Naive thymus-derived CD4-positive, alpha-beta T cell (primary cell): ENCODE measurements at regions of chr11 and their contacts with region 1.

Region 1: GRCh38 chr11:128522055-128522942 is 65.1 kb downstream of the ETS1 start:
- DNase-seq: peak; percentile 67 to 95 (median 84)
- ATAC-seq: peak; percentile 87
- H3K4me3 ChIP-seq: peak overlapping the region; percentile 96
- H3K4me3 Mint-ChIP-seq: peak overlapping the region; percentile 94 to 100 (median 98)
- H3K27ac ChIP-seq: peak overlapping the region; percentile 97
- H3K27ac Mint-ChIP-seq: peak overlapping the region; percentile 94 to 99 (median 98)
- H3K4me1 ChIP-seq: peaks cover 36 to 43% of the 10 kb centered on the region in 2 donors
- H3K4me1 Mint-ChIP-seq: peaks cover 35 to 52% (median 45%) of the 10 kb centered on the region in 7 donors
- H3K27me3 ChIP-seq: no peaks in the 10 kb centered on the region
- H3K27me3 Mint-ChIP-seq: peaks cover 0 to 3% (median 0%) of the 10 kb centered on the region in 5 donors

Region 2: GRCh38 chr11:128302425-128303186 is 219.7 kb before region 1 on chr11:
- CTCF ChIA-PET with region 1: interaction called, 3 read pairs
- POLR2A ChIA-PET with region 1: interaction called, 691 read pairs
- intact Hi-C with region 1: loop called (anchors 1 kb)
- DNase-seq: peak; percentile 39 to 97 (median 92)
- ATAC-seq: peak; percentile 92
- H3K4me3 ChIP-seq: peak overlapping the region; percentile 52
- H3K4me3 Mint-ChIP-seq: peak overlapping the region; percentile 81 to 98 (median 93)
- H3K27ac ChIP-seq: peak overlapping the region; percentile 98
- H3K27ac Mint-ChIP-seq: peak overlapping the region; percentile 93 to 100 (median 98)
- H3K4me1 ChIP-seq: peaks cover 83 to 95% of the 10 kb centered on the region in 2 donors
- H3K4me1 Mint-ChIP-seq: peaks cover 52 to 92% (median 88%) of the 10 kb centered on the region in 7 donors
- H3K27me3 ChIP-seq: no peaks in the 10 kb centered on the region
- H3K27me3 Mint-ChIP-seq: no peaks in the 10 kb centered on the region

Region 3: GRCh38 chr11:128488471-128488870 is 33.8 kb before region 1 on chr11:
- CTCF ChIA-PET with region 1: interaction called, 7 read pairs
- POLR2A ChIA-PET with region 1: interaction called, 101 read pairs
- intact Hi-C with region 1: no loop called
- DNase-seq: peak in 1 of 9 donors; percentile 73
- ATAC-seq: peak; percentile 31
- H3K4me3 ChIP-seq: no peak overlapping the region
- H3K4me3 Mint-ChIP-seq: peak overlapping the region; percentile 62 to 99 (median 76)
- H3K27ac ChIP-seq: peak overlapping the region; percentile 97
- H3K27ac Mint-ChIP-seq: peak overlapping the region; percentile 73 to 99 (median 96)
- H3K4me1 ChIP-seq: peaks cover 96% of the 10 kb centered on the region in 2 donors
- H3K4me1 Mint-ChIP-seq: peaks cover 70 to 100% (median 100%) of the 10 kb centered on the region in 7 donors
- H3K27me3 ChIP-seq: no peaks in the 10 kb centered on the region
- H3K27me3 Mint-ChIP-seq: no peaks in the 10 kb centered on the region

Region 4: DNA sequence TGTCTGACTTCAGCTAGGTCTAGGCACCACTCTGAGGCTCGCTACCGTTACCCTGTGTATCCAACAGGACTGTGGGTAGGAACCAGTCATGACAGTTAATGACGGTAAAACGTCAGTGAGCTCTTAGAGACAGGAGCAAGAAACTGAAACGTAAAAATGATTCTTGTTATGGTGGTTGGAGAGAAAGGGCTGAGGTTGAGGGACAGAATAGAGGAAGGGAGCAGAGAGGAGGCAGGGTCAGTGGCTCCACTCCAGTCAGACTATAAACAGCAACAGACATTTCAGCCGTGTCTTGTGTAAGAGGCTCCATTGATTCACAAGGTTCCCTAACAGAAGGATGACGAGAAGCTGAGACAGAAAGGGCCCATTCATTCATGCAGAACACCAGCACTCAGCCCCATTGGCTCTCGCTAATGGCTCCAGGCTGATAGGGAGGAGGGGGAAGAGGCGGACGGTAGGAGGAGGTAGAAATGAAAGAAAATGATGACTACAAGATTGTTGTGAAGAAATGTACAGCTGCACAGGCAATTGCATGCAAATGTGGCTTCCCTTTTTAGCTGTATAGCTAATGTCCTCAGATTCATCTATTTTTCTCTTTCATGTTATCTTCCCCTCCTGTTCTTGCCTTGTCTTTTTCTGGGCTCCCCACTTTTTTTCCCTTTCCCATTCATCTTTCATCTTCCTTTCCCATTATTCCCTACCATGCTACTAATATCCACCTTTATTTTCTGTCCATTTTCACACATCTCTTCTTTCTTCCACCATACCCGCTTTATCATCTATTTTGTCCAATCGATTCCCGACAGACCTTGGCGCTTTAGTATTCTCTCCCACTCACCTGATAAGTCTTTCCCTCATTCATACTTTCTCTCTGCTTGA is 30.7 kb after region 1 on chr11:
- CTCF ChIA-PET with region 1: interaction called, 5 read pairs
- POLR2A ChIA-PET with region 1: interaction called, 380 read pairs
- intact Hi-C with region 1: loop called (anchors 1 kb)
- DNase-seq: no peak
- ATAC-seq: peak; percentile 77
- H3K4me3 ChIP-seq: no peak overlapping the region
- H3K4me3 Mint-ChIP-seq: peak overlapping the region in 9 of 10 donors; percentile 1 to 50 (median 23)
- H3K27ac ChIP-seq: peak overlapping the region; percentile 20
- H3K27ac Mint-ChIP-seq: peak overlapping the region; percentile 27 to 99 (median 90)
- H3K4me1 ChIP-seq: peaks cover 36 to 39% of the 10 kb centered on the region in 2 donors
- H3K4me1 Mint-ChIP-seq: peaks cover 32 to 69% (median 62%) of the 10 kb centered on the region in 7 donors
- H3K27me3 ChIP-seq: no peaks in the 10 kb centered on the region
- H3K27me3 Mint-ChIP-seq: no peaks in the 10 kb centered on the region

Region 5: GRCh38 chr11:128695539-128696221 is 173.4 kb after region 1 on chr11:
- CTCF ChIA-PET with region 1: no interaction called
- POLR2A ChIA-PET with region 1: interaction called, 7 read pairs
- intact Hi-C with region 1: loop called (anchors 2 to 5 kb)
- DNase-seq: peak in 7 of 9 donors; percentile 39 to 63 (median 52)
- ATAC-seq: peak; percentile 75
- H3K4me3 ChIP-seq: peak overlapping the region; percentile 82
- H3K4me3 Mint-ChIP-seq: peak overlapping the region; percentile 89 to 99 (median 96)
- H3K27ac ChIP-seq: peak overlapping the region; percentile 86
- H3K27ac Mint-ChIP-seq: peak overlapping the region; percentile 72 to 96 (median 94)
- H3K4me1 ChIP-seq: peaks cover 45 to 53% of the 10 kb centered on the region in 2 donors
- H3K4me1 Mint-ChIP-seq: peaks cover 53 to 75% (median 67%) of the 10 kb centered on the region in 7 donors
- H3K27me3 ChIP-seq: no peaks in the 10 kb centered on the region
- H3K27me3 Mint-ChIP-seq: peaks cover 0 to 22% (median 0%) of the 10 kb centered on the region in 5 donors

Region 6: GRCh38 chr11:130002846-130003716 is 1480.8 kb after region 1 on chr11:
- CTCF ChIA-PET with region 1: no interaction called
- POLR2A ChIA-PET with region 1: no interaction called
- intact Hi-C with region 1: loop called in 1 of 2 experiments (anchors 5 kb)
- DNase-seq: peak; percentile 75 to 97 (median 94)
- ATAC-seq: peak; percentile 85
- H3K4me3 ChIP-seq: peak overlapping the region; percentile 76
- H3K4me3 Mint-ChIP-seq: peak overlapping the region; percentile 87 to 100 (median 99)
- H3K27ac ChIP-seq: peak overlapping the region; percentile 98
- H3K27ac Mint-ChIP-seq: peak overlapping the region; percentile 99 to 100 (median 100)
- H3K4me1 ChIP-seq: peaks cover 16 to 22% of the 10 kb centered on the region in 2 donors
- H3K4me1 Mint-ChIP-seq: peaks cover 21 to 48% (median 43%) of the 10 kb centered on the region in 7 donors
- H3K27me3 ChIP-seq: no peaks in the 10 kb centered on the region
- H3K27me3 Mint-ChIP-seq: peaks cover 0 to 8% (median 0%) of the 10 kb centered on the region in 5 donors